Dorsolateral prefrontal cortex (tissue), 120 donors: ENCODE measurements at regions of chr6 and their contacts with region 1.

Region 1: GRCh38 chr6:34236131-34236996 is at the start of gene HMGA1:
- DNase-seq: peak; percentile 76 to 89 (median 85)
- H3K4me3 ChIP-seq: peak within 1 kb of the TSS; percentile 69 to 93 (median 81)
- H3K27ac ChIP-seq: peak within 1 kb of the TSS; percentile 79 to 97 (median 93)
- H3K27me3 ChIP-seq: no peaks in the 10 kb centered on the region
- CTCF ChIP-seq: peak in 6 of 56 donors; percentile 5 to 36 (median 18)
- total RNA-seq, gene HMGA1: 33.1 to 85.0 (median 58.3) TPM

Region 2: GRCh38 chr6:34223956-34224940 is 12.1 kb before region 1 on chr6:
- intact Hi-C with region 1: loop called in 1 of 2 experiments (anchors 1 kb)
- DNase-seq: peak; percentile 81 to 95 (median 88)
- H3K4me3 ChIP-seq: peak overlapping the region; percentile 47 to 98 (median 72)
- H3K27ac ChIP-seq: peak overlapping the region; percentile 12 to 97 (median 93)
- H3K27me3 ChIP-seq: no peaks in the 10 kb centered on the region
- CTCF ChIP-seq: peak in 6 of 56 donors; percentile 5 to 35 (median 12)